Gastrocnemius medialis (tissue), 4 donors: ENCODE measurements at regions of chr9 and their contacts with region 1.

Region 1: GRCh38 chr9:92634712-92635605 is 35.0 kb downstream of the IPPK start:
- DNase-seq: peak; percentile 27 to 54
- ATAC-seq: peak; percentile 52 to 84
- H3K4me3 ChIP-seq: no peak overlapping the region
- H3K27ac ChIP-seq: no peak overlapping the region
- H3K4me1 ChIP-seq: no peaks in the 10 kb centered on the region
- H3K27me3 ChIP-seq: no peaks in the 10 kb centered on the region
- CTCF ChIP-seq: peak; percentile 71 to 88 (median 85)
- POLR2A ChIP-seq: no peak

Region 2: DNA sequence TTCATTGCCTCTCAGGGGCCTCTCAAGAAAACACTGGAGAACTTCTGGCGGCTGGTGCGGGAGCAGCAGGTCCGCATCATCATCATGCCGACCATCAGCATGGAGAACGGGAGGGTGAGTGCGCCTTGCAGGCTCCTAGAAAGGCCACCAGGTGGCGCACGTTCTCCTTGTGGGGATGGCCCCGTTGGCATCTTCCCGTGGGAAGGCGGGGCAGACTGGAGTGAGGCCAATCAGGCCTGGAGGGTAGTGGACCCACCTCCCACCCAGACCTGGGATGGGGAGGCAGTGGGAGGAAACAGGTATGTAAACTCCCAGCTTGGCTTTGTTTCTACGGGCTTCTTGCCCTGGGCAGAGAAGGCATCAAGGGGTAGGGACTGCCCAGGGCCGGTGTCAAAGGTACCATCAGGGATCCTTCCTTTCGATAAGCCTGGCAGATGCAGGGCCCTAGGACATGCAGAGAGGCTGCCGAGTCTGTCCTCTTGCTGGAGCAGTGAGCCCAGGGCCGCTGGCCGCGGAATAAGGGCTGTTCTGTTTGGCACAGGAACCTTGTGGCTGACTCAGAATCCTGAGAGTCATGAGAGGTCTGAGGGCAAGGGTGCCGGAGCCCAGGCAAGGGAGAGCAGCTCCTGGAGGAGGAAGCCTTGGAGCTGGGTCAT is 500.9 kb before region 1 on chr9:
- in situ Hi-C with region 1: loop called in 3 of 4 experiments (anchors 10 to 25 kb)
- intact Hi-C with region 1: no loop called
- DNase-seq: peak in 1 of 2 donors; percentile 58
- ATAC-seq: peak in 1 of 2 donors; percentile 87
- H3K4me3 ChIP-seq: no peak overlapping the region
- H3K27ac ChIP-seq: no peak overlapping the region
- H3K4me1 ChIP-seq: no peaks in the 10 kb centered on the region
- H3K27me3 ChIP-seq: no peaks in the 10 kb centered on the region
- CTCF ChIP-seq: peak; percentile 56 to 91 (median 70)
- POLR2A ChIP-seq: no peak

Region 3: DNA sequence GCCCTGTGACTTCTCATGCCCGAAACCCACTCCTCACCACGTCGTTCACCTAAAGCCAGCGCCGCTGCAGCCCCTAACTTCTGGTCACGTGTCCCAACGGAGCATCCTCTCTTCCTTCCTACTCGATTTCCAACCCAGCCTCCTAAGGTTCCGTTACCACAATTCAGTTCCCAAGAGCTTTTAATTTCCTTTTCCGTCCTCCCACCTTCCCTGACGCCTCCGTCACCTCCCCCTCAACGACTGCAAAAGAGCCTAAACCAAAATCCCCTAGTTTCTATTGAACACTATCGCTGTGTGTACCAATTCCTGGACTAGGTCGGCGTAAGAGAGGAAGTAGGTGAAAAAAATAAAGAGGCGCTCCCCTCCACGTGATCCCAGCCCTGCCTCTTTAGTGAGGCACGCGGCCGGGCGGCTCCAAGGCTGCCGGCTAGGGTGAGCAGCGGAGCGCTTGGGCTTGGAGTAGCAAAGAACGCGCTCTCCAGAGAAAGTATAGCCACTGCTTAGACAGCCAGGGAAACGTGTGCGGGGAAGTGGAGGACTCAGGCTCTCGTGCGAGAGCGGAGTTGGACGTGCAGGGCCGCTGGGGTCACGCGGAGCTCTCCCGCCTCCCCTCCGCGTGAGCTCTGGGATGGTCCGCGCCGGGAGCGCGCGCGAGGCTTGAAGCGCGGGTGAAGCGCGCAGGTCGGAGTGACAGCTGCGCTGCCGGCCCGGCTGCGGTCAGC is 309.5 kb before region 1 on chr9 and contains the starts of genes CENPP and NOL8:
- in situ Hi-C with region 1: loop called in 3 of 4 experiments (anchors 10 to 25 kb)
- intact Hi-C with region 1: no loop called
- DNase-seq: peak; percentile 80 to 85
- ATAC-seq: peak; percentile 98
- H3K4me3 ChIP-seq: peak within 1 kb of the TSS; percentile 77 to 95 (median 85)
- H3K27ac ChIP-seq: peak within 1 kb of the TSS; percentile 91 to 98 (median 97)
- H3K4me1 ChIP-seq: peaks cover 21 to 31% of the 10 kb centered on the region in 2 donors
- H3K27me3 ChIP-seq: no peaks in the 10 kb centered on the region
- CTCF ChIP-seq: peak in 1 of 5 experiments; percentile 24
- POLR2A ChIP-seq: peak in 1 of 2 donors; percentile 67
- total RNA-seq, gene CENPP: 1.8 to 11.5 (median 8.7) TPM
- total RNA-seq, gene NOL8: 11.5 to 20.2 (median 14.0) TPM

Region 4: GRCh38 chr9:92342825-92343488 is 292.0 kb before region 1 on chr9:
- in situ Hi-C with region 1: loop called in 3 of 4 experiments (anchors 10 to 25 kb)
- intact Hi-C with region 1: loop called (anchors 5 kb)
- DNase-seq: no peak
- ATAC-seq: no peak
- H3K4me3 ChIP-seq: no peak overlapping the region
- H3K27ac ChIP-seq: no peak overlapping the region
- H3K4me1 ChIP-seq: no peaks in the 10 kb centered on the region
- H3K27me3 ChIP-seq: no peaks in the 10 kb centered on the region
- CTCF ChIP-seq: peak in 2 of 5 experiments; percentile 16 to 19
- POLR2A ChIP-seq: no peak

Region 5: DNA sequence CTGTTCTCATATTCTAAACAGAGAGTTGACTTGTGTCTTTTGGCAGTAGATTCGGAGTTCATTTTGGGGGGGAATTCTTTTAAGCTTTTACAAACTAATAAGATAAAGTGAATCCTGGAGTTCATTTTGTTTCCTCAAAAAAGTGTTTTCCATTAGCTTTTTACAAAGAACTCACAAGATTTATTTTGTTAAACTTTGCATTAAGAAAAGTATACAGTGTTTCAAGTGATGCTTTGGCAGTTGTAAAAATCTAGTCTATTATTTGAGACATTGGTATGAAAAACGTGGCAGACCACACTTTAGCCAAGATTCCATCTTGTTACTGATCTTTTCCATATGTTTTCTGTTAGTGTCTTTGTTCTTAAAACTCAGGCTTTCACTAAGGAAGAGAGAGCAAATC is 209.5 kb before region 1 on chr9:
- in situ Hi-C with region 1: no loop called
- intact Hi-C with region 1: no loop called
- DNase-seq: no peak
- ATAC-seq: no peak
- H3K4me3 ChIP-seq: no peak overlapping the region
- H3K27ac ChIP-seq: no peak overlapping the region
- H3K4me1 ChIP-seq: no peaks in the 10 kb centered on the region
- H3K27me3 ChIP-seq: no peaks in the 10 kb centered on the region
- CTCF ChIP-seq: no peak
- POLR2A ChIP-seq: no peak

Region 6: DNA sequence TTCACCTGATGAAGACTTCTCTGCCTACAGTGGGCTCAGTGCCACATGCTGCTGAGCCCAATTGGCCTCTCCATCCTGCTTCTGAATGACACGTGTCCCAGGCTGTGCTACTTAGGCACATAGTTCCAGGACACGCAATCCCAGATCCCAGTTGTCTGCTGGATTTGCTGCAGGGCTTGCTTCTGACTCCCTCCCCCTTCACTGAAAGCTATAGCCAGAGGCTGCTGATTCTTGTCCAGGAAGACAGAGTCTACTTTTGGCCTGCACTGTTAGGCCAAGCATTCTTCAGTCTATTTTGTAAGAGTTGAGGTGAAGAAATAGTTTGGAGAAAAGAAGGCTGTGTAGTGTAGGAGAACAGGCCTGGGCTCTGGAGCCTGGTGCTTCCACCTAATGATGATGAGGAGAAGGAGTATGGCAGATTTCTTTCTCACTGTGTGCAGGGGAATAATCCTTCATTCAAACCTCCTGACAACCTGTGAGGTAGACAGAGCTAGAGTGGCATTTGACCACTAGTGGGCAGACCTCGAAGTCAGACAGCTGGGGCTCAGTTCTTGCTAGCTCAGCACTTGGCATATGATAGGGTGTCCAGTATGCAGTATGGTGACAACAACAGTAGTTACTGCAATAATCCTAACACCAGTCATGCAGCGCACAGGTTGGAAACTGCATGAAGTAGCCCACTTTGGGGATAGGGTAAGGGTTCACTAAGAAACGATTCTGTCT is 133.1 kb before region 1 on chr9:
- in situ Hi-C with region 1: no loop called
- intact Hi-C with region 1: loop called (anchors 10 kb)
- DNase-seq: peak; percentile 33 to 69
- ATAC-seq: peak; percentile 83 to 91
- H3K4me3 ChIP-seq: no peak overlapping the region
- H3K27ac ChIP-seq: peak overlapping the region; percentile 29 to 52 (median 34)
- H3K4me1 ChIP-seq: peaks cover 6 to 7% of the 10 kb centered on the region in 2 donors
- H3K27me3 ChIP-seq: no peaks in the 10 kb centered on the region
- CTCF ChIP-seq: peak in 2 of 5 experiments; percentile 20 to 37
- POLR2A ChIP-seq: no peak

Region 7: GRCh38 chr9:92650839-92651621 is 16.1 kb after region 1 on chr9:
- in situ Hi-C with region 1: no loop called
- intact Hi-C with region 1: no loop called
- DNase-seq: no peak
- ATAC-seq: no peak
- H3K4me3 ChIP-seq: no peak overlapping the region
- H3K27ac ChIP-seq: no peak overlapping the region
- H3K4me1 ChIP-seq: peaks cover 6% of the 10 kb centered on the region in 2 donors
- H3K27me3 ChIP-seq: no peaks in the 10 kb centered on the region
- CTCF ChIP-seq: no peak
- POLR2A ChIP-seq: no peak